GM18951 (cell line): ENCODE measurements at regions of chr16 and their contacts with region 1.

Region 1: DNA sequence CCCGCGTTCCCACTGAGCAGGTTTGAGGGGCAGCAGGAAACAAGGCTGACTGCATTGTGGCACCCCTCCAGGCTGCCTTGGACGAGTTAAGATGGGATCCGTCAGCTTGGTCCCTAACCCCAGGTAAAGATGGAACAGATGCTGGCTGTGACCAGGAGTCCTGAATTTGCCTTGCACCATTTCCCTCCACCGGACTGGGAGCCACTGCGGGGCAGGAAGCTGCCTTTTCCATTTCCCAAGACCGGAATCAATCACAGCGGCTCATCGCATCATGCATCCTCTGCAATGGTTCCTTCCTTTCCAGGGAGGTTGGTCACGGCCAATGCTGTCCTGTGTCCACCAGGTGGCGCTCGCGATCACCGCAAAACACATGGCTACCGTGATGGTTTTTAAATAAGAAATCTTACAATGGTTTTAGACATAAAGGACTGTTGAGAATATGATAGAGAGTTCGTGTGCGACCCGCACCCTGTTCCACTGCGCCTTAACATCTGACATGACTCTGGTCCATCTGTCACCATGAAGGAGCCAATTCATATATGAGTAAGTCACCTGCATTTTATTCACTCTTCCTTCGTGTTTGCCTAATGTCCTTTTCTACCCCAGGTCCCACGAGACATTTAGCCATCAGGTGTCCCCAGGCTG is 6.8 kb upstream of the MEAK7 start:
- POLR2A ChIP-seq: no peak

Region 2: DNA sequence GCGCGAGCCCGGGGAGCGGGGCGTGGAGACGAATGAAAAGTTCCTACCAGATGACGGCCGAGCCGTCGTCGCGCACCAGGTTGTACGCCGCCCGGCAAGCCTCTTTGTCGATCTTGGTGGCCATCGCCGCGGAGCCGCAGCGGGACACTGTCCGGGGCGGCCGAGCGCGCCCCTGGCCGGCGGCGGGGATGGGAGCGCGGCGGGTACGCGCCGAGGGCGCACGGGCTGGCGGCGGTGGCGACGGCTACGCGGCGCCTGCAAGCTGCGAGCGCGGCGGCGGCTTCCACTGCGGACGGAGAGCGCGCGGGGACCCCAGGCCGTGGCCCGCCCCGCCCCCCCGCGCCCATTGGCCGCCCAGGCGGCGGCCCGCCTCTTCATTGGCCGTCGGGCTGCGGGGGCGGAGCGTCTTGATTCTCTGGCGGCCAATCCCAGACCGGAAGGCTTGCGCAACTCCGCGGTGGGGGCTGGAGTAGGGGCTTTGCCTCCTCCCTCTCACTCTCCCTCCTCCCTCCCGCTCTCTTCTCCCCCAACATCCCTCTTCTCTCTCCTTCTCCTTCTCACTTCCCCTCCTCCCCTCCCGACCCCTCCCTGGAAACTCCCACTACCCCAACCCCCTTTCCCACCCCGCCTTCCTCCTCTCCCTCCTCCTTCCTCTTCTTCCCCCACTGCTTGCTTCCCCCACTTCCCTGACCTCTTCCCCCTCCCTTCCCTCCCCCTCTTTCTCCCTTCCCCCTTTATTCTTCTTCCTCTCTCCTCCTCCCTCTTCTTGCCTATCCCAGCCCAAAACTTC is 106.7 kb after region 1 on chr16 and contains the start of gene COTL1:
- in situ Hi-C with region 1: loop called (anchors 5 kb)
- POLR2A ChIP-seq: peak; percentile 98

Region 3: GRCh38 chr16:84741340-84741830 is 230.1 kb after region 1 on chr16:
- in situ Hi-C with region 1: loop called (anchors 5 kb)
- POLR2A ChIP-seq: no peak